ENCODE measurements at regions of chr2 and their contacts with region 1.

Region 1: DNA sequence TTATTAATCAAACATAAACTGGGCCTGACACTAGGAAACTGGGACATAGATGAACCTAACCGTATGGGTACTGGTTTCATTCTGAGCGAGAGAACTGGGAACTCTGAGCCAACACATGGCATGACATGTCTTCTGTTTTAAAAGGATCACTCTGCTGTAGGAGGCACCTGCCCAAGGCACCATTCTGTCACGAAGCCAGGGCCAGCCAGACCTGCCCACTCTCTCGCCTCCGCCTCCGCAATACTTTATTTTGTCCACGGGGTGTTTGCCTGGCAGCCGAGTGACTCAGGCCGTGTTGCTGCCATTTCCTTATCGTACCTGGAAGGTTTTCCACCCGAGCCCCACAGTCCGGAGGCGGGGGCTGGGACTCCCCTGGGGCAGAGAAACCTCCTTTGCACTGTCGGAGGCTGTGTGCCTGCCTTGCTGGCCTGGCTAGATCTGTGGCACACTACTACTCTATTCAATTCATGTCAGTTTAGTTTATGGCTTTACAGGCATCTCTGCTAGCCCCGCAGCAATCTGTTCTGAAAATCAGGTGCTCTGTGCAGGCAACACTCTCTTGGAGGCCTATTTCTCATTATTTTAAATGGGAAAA is 120.4 kb upstream of the ACKR3 start:
- DNase-seq: peak; percentile 67 to 73
- H3K4me3 ChIP-seq: peak overlapping the region in 2 of 3 donors; percentile 21 to 35
- H3K27ac ChIP-seq: peak overlapping the region; percentile 78 to 80
- H3K4me1 ChIP-seq: no peaks in the 10 kb centered on the region
- H3K27me3 ChIP-seq: no peaks in the 10 kb centered on the region
- CTCF ChIP-seq: no peak
- POLR2A ChIP-seq: no peak

Region 2: GRCh38 chr2:236399409-236399808 is 49.9 kb before region 1 on chr2:
- intact Hi-C with region 1: loop called (anchors 1 kb)
- DNase-seq: no peak
- H3K4me3 ChIP-seq: no peak overlapping the region
- H3K27ac ChIP-seq: no peak overlapping the region
- H3K4me1 ChIP-seq: no peaks in the 10 kb centered on the region
- H3K27me3 ChIP-seq: no peaks in the 10 kb centered on the region
- CTCF ChIP-seq: no peak
- POLR2A ChIP-seq: no peak

Region 3: GRCh38 chr2:237141556-237141955 is 692.3 kb after region 1 on chr2:
- intact Hi-C with region 1: no loop called
- DNase-seq: no peak
- H3K4me3 ChIP-seq: no peak overlapping the region
- H3K27ac ChIP-seq: peak overlapping the region; percentile 21 to 90
- H3K4me1 ChIP-seq: no peaks in the 10 kb centered on the region
- H3K27me3 ChIP-seq: no peaks in the 10 kb centered on the region
- CTCF ChIP-seq: no peak
- POLR2A ChIP-seq: no peak

Measured in breast epithelium (tissue), 4 donors.